ENCODE measurements at regions of chr15 and their contacts with region 1.

Region 1: DNA sequence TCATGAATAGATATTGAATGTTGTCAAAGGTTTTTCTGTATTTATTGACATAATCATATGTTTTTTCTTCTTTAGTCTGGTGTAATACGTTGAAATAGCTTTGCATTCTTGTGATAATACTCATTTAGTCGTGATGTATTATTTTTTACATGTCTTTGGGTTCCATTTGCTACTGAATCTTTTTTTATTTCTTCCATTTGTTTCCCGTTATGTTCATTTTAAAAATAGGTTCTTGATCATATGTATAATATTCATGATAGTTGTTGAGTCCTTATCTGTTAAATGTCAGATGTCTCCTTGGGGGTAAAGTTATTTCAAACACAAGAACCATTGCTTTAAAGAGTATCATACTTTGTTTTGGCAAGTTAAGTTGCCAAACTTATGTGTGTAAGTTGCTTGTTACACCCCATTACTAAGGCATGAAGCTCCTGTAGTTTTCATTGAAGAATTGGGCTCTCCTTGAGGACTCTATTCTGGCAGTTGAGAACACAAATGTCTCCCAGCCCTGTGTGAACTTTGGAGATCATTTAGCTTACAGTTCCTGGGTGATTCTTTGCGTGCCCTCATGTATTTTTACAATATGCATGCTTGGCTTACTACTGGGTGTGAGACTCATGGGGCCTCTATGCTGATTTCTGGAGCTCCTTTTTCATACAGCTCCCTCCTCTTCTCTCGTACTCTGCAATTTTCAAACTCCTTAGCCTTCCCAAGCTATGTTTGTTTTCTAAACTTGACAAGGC is 8.3 kb downstream of the AKAP13 start:
- DNase-seq: no peak
- ATAC-seq: no peak
- H3K4me3 Mint-ChIP-seq: no peak overlapping the region
- H3K27ac Mint-ChIP-seq: peak overlapping the region; percentile 65
- H3K4me1 Mint-ChIP-seq: peaks cover 40% of the 10 kb centered on the region
- H3K27me3 Mint-ChIP-seq: no peaks in the 10 kb centered on the region
- CTCF ChIP-seq: no peak

Region 2: DNA sequence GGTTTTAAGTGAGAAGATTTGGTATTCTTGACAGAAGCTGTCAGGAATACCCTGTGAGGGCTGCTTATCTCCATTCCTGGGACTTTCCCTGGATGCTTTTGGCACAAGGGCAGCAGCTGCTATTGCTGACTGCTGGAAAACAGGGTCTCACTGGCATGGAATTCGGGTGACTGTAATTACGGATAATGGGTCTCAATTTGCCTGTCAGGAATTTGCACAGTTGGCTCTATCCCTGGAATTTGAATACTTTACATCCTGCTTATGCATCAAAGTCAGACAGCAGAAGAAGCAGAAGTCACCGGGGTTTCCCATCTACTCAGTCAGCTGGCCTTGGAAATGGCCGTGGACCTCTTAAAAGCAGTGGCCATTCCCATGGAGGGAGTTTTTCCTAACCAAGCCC is 34.3 kb before region 1 on chr15:
- CTCF ChIA-PET with region 1: no interaction called
- POLR2A ChIA-PET with region 1: interaction called, 11 read pairs
- intact Hi-C with region 1: no loop called
- DNase-seq: no peak
- ATAC-seq: no peak
- H3K4me3 Mint-ChIP-seq: no peak overlapping the region
- H3K27ac Mint-ChIP-seq: no peak overlapping the region
- H3K4me1 Mint-ChIP-seq: peaks cover 8% of the 10 kb centered on the region
- H3K27me3 Mint-ChIP-seq: no peaks in the 10 kb centered on the region
- CTCF ChIP-seq: no peak

Region 3: GRCh38 chr15:85402195-85402881 is 13.6 kb after region 1 on chr15:
- CTCF ChIA-PET with region 1: interaction called, 5 read pairs
- POLR2A ChIA-PET with region 1: interaction called, 395 read pairs
- intact Hi-C with region 1: loop called (anchors 1 kb)
- DNase-seq: no peak
- ATAC-seq: no peak
- H3K4me3 Mint-ChIP-seq: peak overlapping the region; percentile 12
- H3K27ac Mint-ChIP-seq: peak overlapping the region; percentile 89
- H3K4me1 Mint-ChIP-seq: peaks cover 89% of the 10 kb centered on the region
- H3K27me3 Mint-ChIP-seq: no peaks in the 10 kb centered on the region
- CTCF ChIP-seq: no peak